A549 (cell line): ENCODE measurements at regions of chr14 and their contacts with region 1.

Region 1: GRCh38 chr14:64891839-64892375 is 12.2 kb upstream of the SPTB start:
- DNase-seq: peak; percentile 56 to 80
- ATAC-seq: peak; percentile 95 to 99
- H3K4me3 ChIP-seq: no peak overlapping the region
- H3K27ac ChIP-seq: no peak overlapping the region
- H3K4me1 ChIP-seq: no peaks in the 10 kb centered on the region
- CTCF ChIP-seq: peak; percentile 79
- EP300 ChIP-seq: no peak
- POLR2A ChIP-seq: no peak
- RAD21 ChIP-seq: peak; percentile 89 to 90

Region 2: DNA sequence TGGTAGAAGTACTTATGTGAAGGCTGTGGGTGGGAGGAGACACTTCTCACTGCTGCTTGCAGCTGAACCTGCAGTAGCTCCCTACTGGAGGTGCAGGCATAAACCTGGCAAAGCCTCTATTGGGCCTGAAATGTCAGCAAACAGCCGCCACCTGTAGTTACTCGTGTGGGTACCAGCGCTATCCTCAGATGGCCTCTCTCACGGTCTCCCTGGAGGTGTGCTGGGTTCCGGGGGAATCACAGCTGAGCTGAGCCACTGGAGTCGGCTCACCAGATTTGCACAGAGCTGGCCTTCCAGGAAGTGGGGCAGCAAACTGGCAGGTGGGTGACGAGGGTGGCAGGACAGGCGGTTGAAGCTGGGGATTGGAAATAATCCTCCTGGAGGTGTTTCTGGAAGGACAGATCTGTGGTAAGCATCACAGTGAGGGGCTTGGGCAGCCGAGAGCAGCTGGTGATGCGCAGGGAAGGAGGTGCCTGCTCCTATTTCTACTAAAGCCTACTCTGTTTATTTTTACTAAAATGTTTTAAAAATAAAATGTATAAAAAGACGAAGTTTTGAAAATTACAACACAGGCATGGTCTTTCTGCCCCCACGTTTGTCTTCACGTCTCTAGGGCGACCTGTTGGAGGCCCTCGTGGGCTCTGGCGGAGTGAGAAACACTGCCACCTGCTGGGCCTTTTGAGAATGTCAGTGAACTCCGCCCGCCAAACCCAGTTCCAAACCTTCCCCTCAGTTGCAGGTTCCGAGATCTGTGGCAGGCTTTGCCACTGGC is 255.5 kb before region 1 on chr14:
- CTCF ChIA-PET with region 1: interaction called, 10 read pairs
- POLR2A ChIA-PET with region 1: no interaction called
- DNase-seq: peak; percentile 74 to 84
- ATAC-seq: peak; percentile 90 to 93
- H3K4me3 ChIP-seq: no peak overlapping the region
- H3K27ac ChIP-seq: peak overlapping the region; percentile 62 to 83
- H3K4me1 ChIP-seq: peaks cover 42% of the 10 kb centered on the region
- CTCF ChIP-seq: peak; percentile 93
- EP300 ChIP-seq: no peak
- POLR2A ChIP-seq: no peak
- RAD21 ChIP-seq: peak; percentile 83 to 94

Region 3: DNA sequence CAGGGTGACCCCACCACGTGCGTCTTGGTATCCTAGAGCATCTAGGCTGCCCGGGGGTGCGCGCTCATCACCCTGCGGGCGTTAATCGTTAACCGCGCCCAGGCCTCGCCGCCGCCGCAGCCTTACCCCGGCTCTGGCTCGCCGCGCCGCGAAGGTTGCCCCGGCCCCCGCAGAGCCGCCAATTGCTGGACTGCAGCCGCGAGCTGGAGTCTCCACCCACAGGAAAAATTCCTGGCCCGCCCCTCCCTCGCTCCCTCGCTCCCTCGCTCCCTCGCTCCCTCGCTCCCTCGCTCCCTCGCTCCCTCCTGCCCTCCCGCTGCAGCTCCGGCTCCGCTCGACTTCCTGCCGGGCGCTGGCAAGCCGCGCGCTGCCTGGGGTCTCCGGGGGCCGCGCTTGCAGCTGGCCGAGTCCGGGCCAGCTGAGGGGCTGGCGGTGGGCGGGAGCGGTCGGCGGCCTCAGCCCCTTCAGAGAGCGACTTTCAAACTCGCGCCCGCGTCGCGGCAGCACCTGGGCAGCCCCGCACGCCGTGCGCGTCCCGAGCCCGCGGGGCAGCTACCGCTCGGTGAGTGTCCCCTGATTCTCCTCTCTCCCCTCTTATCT is 187.7 kb before region 1 on chr14 and contains the start of gene PLEKHG3:
- CTCF ChIA-PET with region 1: interaction called, 16 read pairs
- POLR2A ChIA-PET with region 1: no interaction called
- DNase-seq: peak; percentile 79 to 84
- ATAC-seq: peak; percentile 72 to 83
- H3K4me3 ChIP-seq: peak within 1 kb of the TSS; percentile 72
- H3K27ac ChIP-seq: peak within 1 kb of the TSS; percentile 90 to 95
- H3K4me1 ChIP-seq: peaks cover 58% of the 10 kb centered on the region
- CTCF ChIP-seq: no peak
- EP300 ChIP-seq: no peak
- POLR2A ChIP-seq: no peak; the same call in 1 of the 2 replicates
- RAD21 ChIP-seq: 0 out of 5 replicates have a peak, but pooled peaks of 1 of the 2 experiments have one; percentile 22
- polyA plus RNA-seq, gene PLEKHG3: 29.8 and 30.5 TPM in 2 replicates

Region 4: DNA sequence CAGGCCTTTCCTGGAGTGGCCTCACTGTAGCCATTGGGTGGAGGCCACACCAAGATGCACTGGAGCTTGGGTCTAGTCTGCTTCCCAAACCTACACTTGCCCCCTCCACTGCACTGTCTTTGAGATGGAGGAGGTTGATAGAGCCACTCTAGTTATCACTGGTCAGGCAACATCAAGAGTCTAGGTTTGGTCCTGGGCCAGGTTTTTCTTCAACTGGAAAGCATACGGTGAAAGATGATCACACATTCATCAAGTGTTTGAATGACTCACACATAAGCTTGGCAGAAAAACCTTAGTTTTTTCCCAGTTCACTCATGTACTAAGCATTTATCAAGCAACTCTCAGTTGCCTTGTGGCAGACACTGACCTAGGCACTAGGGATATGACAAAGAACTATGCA is 103.2 kb before region 1 on chr14:
- CTCF ChIA-PET with region 1: interaction called, 52 read pairs
- POLR2A ChIA-PET with region 1: no interaction called
- DNase-seq: peak; percentile 46 to 62
- ATAC-seq: peak; percentile 62 to 81; a peak in 5 of 6 replicates
- H3K4me3 ChIP-seq: no peak overlapping the region
- H3K27ac ChIP-seq: peak overlapping the region; percentile 33 to 71
- H3K4me1 ChIP-seq: peaks cover 27% of the 10 kb centered on the region
- CTCF ChIP-seq: no peak
- EP300 ChIP-seq: no peak
- POLR2A ChIP-seq: no peak
- RAD21 ChIP-seq: no peak

Region 5: DNA sequence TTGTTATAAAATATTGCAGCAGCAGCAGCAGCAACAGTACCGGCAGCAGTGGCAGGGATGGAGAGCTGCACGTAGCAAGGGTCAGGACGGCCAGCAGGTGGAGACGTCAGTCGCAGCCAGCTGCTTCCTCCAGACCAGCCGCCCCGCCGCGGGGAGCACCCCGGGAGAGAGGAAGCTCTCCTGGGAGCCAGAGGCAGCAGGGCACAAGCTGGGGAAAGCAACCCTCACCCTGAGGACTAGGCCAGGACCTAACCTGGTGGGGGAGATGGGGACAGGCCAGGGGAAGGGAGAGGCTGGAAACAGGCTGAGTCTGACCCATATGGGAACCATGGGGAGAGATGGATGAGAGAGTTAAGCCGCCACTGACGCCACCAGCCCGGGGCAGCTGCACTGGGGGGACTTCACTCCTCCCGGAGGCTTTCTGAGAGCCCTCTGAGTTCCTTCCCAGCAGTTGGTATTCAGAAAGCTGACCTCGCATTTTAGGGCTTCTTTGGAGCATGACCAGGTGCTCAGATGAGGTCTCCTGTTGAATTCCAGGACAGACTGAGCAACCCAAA is 68.5 kb before region 1 on chr14:
- CTCF ChIA-PET with region 1: interaction called, 250 read pairs
- POLR2A ChIA-PET with region 1: interaction called, 6 read pairs
- DNase-seq: peak; percentile 78 to 95
- ATAC-seq: peak; percentile 96 to 99
- H3K4me3 ChIP-seq: no peak overlapping the region
- H3K27ac ChIP-seq: peak overlapping the region; percentile 44 to 76; a peak in 4 of 6 replicates
- H3K4me1 ChIP-seq: peaks cover 7% of the 10 kb centered on the region; the same call in 1 of the 3 replicates
- CTCF ChIP-seq: peak; percentile 81
- EP300 ChIP-seq: no peak
- POLR2A ChIP-seq: no peak
- RAD21 ChIP-seq: peak; percentile 73 to 83

Region 6: GRCh38 chr14:64870160-64870559 is 21.7 kb before region 1 on chr14:
- CTCF ChIA-PET with region 1: interaction called, 11 read pairs
- POLR2A ChIA-PET with region 1: no interaction called
- DNase-seq: no peak
- ATAC-seq: no peak
- H3K4me3 ChIP-seq: no peak overlapping the region
- H3K27ac ChIP-seq: no peak overlapping the region
- H3K4me1 ChIP-seq: 0 out of 3 replicates have a peak, but pooled peaks cover 5% of the 10 kb centered on the region
- CTCF ChIP-seq: no peak
- EP300 ChIP-seq: no peak
- POLR2A ChIP-seq: no peak
- RAD21 ChIP-seq: no peak